Endothelial cell of umbilical vein (primary cell): ENCODE measurements at regions of chr11 and their contacts with region 1.

Region 1: DNA sequence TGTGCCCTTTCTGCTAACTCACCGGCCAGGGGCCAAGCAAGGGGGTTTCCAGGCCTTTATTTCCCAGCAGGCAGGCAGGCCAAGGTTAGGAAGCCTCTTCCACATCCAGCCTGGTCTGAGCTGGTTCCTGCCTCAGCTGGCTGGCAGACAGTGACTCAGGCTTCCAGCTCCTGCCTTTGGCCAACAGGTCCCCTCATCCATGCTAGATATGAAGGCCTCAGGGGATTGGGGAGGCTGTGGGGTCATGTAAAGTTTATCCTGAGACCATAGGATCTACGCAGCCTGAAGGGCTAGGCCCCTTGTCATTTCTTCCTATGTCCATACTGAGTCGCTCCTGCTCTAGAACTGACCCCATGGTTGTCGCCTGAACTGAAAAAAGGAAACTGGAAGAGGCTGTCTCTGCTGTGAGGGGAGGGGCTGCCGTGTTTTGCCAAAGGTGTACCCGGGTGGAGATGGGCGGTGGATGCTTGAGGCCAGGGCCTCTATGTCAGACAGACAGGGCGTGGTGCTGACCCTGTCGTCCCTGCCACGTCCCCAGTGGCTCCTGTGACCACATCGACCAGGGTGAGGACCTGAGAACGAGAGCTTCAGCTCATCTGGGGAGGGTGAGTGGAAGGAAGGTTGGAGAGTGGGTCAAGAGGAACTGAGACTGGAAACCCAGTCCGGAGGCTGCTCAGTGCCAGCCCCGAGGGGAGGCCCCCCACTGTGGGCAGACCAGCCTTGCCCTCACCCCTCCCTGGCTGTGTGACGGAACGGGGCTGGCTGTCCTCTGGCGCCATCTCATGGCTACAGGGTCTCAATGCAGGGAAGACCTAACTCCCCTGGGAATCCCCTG is 17.0 kb downstream of the P2RY6 start:
- DNase-seq: peak; percentile 86
- H3K4me3 ChIP-seq: no peak overlapping the region
- H3K27ac ChIP-seq: peak overlapping the region; percentile 71
- H3K4me1 ChIP-seq: peaks cover 17% of the 10 kb centered on the region
- H3K27me3 ChIP-seq: no peaks in the 10 kb centered on the region
- CTCF ChIP-seq: peak; percentile 95
- POLR2A ChIP-seq: no peak

Region 2: GRCh38 chr11:72831513-72832300 is 457.4 kb before region 1 on chr11:
- CTCF ChIA-PET with region 1: interaction called, 36 read pairs
- POLR2A ChIA-PET with region 1: no interaction called
- dilution Hi-C with region 1: no loop called
- intact Hi-C with region 1: loop called (anchors 1 kb)
- DNase-seq: peak; percentile 80
- H3K4me3 ChIP-seq: no peak overlapping the region
- H3K27ac ChIP-seq: no peak overlapping the region
- H3K4me1 ChIP-seq: peaks cover 9% of the 10 kb centered on the region
- H3K27me3 ChIP-seq: no peaks in the 10 kb centered on the region
- CTCF ChIP-seq: peak; percentile 91 to 97
- POLR2A ChIP-seq: no peak

Region 3: DNA sequence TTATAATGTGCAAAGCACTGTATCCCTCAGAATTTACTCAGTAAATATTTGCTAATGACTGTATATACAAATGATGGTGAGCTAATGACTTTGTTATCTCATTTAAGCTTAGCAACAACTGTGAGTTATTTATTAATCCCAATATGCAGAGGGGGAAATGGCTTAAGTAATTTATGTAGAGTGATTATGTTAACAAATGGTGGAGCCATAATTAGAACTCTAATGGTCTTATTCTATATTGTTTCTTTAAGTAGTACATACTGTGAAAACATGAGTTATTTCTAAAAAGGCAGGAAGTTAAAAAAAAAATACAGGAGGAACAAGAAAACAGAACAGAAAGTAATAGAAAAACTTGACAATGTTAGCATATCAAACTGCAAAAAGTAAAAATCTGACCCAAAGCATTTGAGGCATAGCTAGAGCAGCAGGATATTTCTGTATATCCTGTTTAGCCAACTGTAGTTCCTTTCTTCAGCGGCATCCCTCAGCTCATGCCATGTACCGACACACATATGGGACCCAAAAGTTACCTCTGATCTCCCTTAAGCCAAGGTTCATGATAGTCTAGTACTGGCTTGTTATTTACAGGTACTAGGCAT is 241.2 kb before region 1 on chr11:
- CTCF ChIA-PET with region 1: no interaction called
- POLR2A ChIA-PET with region 1: no interaction called
- dilution Hi-C with region 1: no loop called
- intact Hi-C with region 1: no loop called
- DNase-seq: peak; percentile 34
- H3K4me3 ChIP-seq: no peak overlapping the region
- H3K27ac ChIP-seq: no peak overlapping the region
- H3K4me1 ChIP-seq: peaks cover 10% of the 10 kb centered on the region
- H3K27me3 ChIP-seq: no peaks in the 10 kb centered on the region
- CTCF ChIP-seq: no peak
- POLR2A ChIP-seq: no peak

Region 4: GRCh38 chr11:73236854-73237253 is 52.2 kb before region 1 on chr11:
- CTCF ChIA-PET with region 1: interaction called, 21 read pairs
- POLR2A ChIA-PET with region 1: no interaction called
- dilution Hi-C with region 1: no loop called
- intact Hi-C with region 1: loop called (anchors 1 kb)
- DNase-seq: peak; percentile 61
- H3K4me3 ChIP-seq: no peak overlapping the region
- H3K27ac ChIP-seq: no peak overlapping the region
- H3K4me1 ChIP-seq: peaks cover 7% of the 10 kb centered on the region
- H3K27me3 ChIP-seq: no peaks in the 10 kb centered on the region
- CTCF ChIP-seq: peak; percentile 65 to 81
- POLR2A ChIP-seq: no peak

Region 5: DNA sequence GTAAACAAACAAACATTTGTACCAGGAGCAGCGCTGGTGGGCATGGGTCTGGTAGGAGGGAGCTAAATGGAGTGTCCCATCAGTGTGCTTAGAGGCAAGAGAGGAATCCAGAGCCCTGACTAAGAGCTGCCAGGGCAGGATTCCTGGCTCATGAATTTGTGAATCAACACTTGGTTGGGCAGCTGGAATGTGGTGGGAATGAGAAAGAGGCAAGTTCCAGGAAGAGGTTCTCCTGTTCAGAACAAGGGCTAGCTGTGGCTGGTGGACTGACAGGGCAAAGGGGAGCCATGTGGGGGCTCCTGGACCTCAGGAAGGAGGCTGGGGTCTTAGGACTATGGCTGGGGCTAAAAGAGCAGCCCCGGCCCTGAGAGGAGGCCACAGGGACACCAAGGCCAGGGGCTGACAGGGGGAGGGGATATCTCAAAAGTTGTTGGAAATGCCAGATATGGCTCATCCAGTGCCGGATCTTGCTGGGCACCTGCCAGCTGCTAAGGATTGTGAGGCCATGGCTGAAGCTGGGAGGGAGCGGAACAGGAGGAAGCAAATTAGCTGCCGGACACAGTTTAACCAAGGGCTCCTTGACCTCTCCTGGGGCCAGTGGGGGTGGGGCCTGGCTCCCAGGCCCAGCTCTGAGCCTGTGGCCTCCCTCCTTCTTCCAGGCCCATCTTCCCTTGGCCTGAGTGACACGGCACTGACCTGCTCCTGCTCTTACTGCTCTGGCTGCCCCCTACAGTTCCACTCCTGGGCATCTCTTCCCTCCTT is 31.6 kb before region 1 on chr11:
- CTCF ChIA-PET with region 1: interaction called, 18 read pairs
- POLR2A ChIA-PET with region 1: no interaction called
- dilution Hi-C with region 1: no loop called
- intact Hi-C with region 1: no loop called
- DNase-seq: peak; percentile 24
- H3K4me3 ChIP-seq: no peak overlapping the region
- H3K27ac ChIP-seq: peak overlapping the region; percentile 23
- H3K4me1 ChIP-seq: peaks cover 6% of the 10 kb centered on the region
- H3K27me3 ChIP-seq: no peaks in the 10 kb centered on the region
- CTCF ChIP-seq: no peak
- POLR2A ChIP-seq: no peak

Region 6: DNA sequence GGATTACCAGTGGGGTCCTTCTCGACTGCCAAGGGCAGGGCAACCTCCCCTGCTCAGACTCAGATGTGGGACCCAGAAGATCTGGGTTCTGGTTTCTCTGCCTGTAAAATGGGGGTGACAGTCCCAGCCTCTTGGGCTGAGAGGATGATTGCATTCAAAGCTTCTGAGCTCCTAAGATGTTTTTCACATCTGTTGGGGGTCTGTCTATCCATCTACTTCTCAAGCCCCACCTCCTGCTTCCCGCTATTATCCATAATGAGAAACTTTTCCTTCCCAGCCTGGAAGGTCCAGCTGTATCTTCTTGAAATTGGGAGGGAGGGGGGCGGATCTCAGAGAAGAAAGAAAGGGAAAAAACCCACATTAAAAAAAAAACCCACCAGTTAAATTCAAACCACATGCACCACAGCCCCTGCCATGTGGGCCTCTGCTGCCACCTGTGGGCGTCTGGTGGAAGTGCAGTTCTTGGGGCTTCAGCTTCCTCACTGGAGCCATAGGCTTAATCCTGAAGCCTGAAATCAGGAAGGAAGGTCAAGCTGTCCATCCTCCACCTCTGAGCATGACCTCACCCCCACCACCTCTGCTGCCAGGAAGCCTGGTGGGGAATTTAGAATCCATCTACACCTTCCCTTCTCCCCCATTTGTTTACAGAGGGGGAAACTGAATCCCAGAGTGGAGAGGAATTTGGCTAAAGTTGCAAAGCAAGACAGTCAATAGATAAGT is 46.3 kb after region 1 on chr11:
- CTCF ChIA-PET with region 1: interaction called, 67 read pairs
- POLR2A ChIA-PET with region 1: no interaction called
- dilution Hi-C with region 1: no loop called
- intact Hi-C with region 1: no loop called
- DNase-seq: peak; percentile 88
- H3K4me3 ChIP-seq: no peak overlapping the region
- H3K27ac ChIP-seq: peak overlapping the region; percentile 70
- H3K4me1 ChIP-seq: peaks cover 33% of the 10 kb centered on the region
- H3K27me3 ChIP-seq: no peaks in the 10 kb centered on the region
- CTCF ChIP-seq: peak; percentile 95 to 96
- POLR2A ChIP-seq: no peak